AG04449 (cell line): ENCODE measurements at regions of chr15 and their contacts with region 1.

Region 1: GRCh38 chr15:68304589-68305337 is 27.2 kb downstream of the FEM1B start:
- DNase-seq: no peak
- H3K4me3 ChIP-seq: no peak overlapping the region
- CTCF ChIP-seq: no peak

Region 2: GRCh38 chr15:68204776-68205557 is 99.8 kb before region 1 on chr15 and contains the start of gene CALML4:
- CTCF ChIA-PET with region 1: no interaction called
- POLR2A ChIA-PET with region 1: no interaction called
- DNase-seq: no peak
- H3K4me3 ChIP-seq: no peak within 1 kb of the TSS
- CTCF ChIP-seq: no peak

Region 3: DNA sequence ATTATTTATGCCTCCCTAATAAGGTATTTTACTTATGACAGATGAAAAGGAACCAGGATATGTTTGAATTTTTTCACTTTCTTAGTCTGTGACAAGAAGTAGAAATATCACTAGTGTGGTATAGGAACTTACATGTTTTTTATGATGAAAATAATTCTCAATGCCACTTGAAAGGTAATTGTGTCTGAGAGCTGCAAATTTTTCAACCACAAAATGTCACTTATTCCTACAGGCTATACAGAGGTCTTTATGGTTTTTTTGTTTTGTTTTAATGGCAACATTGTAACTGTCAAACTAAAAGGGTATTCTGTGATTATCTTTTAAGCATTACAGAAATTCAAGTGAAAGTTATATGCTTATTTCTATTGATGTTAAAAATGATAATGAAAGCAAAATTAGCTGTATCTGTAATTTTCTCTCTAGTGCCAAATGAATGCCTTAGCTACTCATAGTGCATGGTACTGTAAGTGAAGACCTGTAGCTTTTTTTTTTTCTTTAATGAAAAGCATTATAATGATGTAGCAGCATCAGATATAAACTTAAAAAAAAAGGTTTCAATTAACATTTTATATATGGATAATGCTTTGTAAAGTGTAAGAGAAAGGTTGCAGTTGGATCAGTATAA is 12.5 kb before region 1 on chr15:
- CTCF ChIA-PET with region 1: interaction called, 46 read pairs
- POLR2A ChIA-PET with region 1: interaction called, 3 read pairs
- DNase-seq: no peak
- H3K4me3 ChIP-seq: no peak overlapping the region
- CTCF ChIP-seq: no peak

Region 4: DNA sequence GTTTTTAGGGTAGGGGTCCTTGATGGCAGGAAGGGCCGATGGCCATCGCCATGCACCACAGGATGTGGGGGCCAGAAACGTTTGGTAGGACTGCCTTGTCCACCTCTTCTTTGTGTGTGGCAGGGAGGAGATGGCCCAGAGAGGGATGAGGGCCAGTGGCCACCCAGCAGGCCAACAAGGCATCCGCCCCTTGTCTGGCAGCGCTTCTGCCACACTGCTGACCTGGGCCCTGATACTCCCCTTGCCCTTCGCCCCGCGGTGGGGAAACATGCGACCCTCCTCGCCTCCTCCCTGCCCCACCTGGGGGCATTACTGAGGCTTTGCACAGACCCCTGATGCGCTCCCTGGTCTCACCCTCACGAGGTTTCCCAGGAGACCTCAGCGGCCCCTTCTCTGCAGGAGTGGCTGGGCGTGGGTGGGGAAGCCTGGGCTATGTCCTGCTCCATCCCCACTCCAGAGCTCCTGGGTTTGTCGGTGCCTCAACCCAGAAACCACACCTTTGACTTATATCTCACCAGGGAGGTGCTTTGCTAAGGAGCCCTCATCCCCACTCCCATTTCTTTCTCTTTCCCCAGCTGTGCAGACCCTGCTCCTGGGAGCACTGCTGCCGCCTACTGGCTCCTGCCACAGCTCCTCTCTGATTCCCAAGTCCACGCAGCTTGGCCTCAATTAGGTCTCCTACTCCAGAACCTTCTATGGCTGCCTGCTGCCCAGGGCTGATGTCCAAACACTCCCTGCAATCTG is 11.5 kb after region 1 on chr15:
- CTCF ChIA-PET with region 1: interaction called, 18 read pairs
- POLR2A ChIA-PET with region 1: interaction called, 4 read pairs
- DNase-seq: no peak
- H3K4me3 ChIP-seq: no peak overlapping the region
- CTCF ChIP-seq: peak; percentile 24